CD8-positive, alpha-beta memory T cell (primary cell): ENCODE measurements at regions of chr12 and their contacts with region 1.

Region 1: DNA sequence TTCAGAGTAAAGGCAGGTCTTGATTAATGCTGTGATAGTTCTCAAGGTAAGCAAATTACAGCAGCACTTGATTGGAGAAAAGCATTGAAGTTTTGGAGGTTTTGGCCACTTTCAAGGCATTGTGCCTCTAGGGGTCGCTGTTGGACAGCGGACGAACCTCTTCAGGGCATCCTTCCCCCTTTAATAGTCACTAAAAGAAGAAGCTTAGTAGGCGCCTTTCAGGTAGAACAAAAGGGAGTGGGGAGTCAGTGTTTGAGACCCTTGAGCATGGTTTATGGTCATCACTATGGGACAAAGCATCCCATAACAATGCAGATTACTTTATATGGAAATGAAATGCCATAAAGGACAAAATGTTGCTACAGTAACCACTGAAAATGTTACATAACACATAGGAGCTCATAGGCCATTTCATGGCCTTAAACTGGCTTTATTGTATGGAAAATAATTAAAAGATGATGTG is 199.5 kb upstream of the DCN start:
- DNase-seq: peak; percentile 61 to 86 (median 78)
- H3K4me3 ChIP-seq: no peak overlapping the region
- H3K4me3 Mint-ChIP-seq: peak overlapping the region in 6 of 7 donors; percentile 50 to 79 (median 72)
- H3K27ac ChIP-seq: no peak overlapping the region
- H3K27ac Mint-ChIP-seq: peak overlapping the region in 5 of 8 donors; percentile 15 to 77 (median 49)
- H3K4me1 ChIP-seq: peaks cover 4% of the 10 kb centered on the region
- H3K4me1 Mint-ChIP-seq: peaks cover 4 to 9% (median 6%) of the 10 kb centered on the region in 3 donors
- H3K27me3 ChIP-seq: no peaks in the 10 kb centered on the region
- H3K27me3 Mint-ChIP-seq: peaks cover 5 to 37% of the 10 kb centered on the region in 2 donors

Region 2: GRCh38 chr12:91355150-91356006 is 26.7 kb before region 1 on chr12:
- CTCF ChIA-PET with region 1: no interaction called
- POLR2A ChIA-PET with region 1: no interaction called
- DNase-seq: peak; percentile 4 to 55 (median 12)
- H3K4me3 ChIP-seq: no peak overlapping the region
- H3K4me3 Mint-ChIP-seq: no peak overlapping the region
- H3K27ac ChIP-seq: no peak overlapping the region
- H3K27ac Mint-ChIP-seq: no peak overlapping the region
- H3K4me1 ChIP-seq: no peaks in the 10 kb centered on the region
- H3K4me1 Mint-ChIP-seq: peaks cover 0 to 5% (median 0%) of the 10 kb centered on the region in 3 donors
- H3K27me3 ChIP-seq: no peaks in the 10 kb centered on the region
- H3K27me3 Mint-ChIP-seq: peaks cover 7 to 40% of the 10 kb centered on the region in 2 donors

Region 3: GRCh38 chr12:91370086-91370868 is 11.8 kb before region 1 on chr12:
- CTCF ChIA-PET with region 1: interaction called, 11 read pairs
- POLR2A ChIA-PET with region 1: no interaction called
- DNase-seq: no peak
- H3K4me3 ChIP-seq: no peak overlapping the region
- H3K4me3 Mint-ChIP-seq: no peak overlapping the region
- H3K27ac ChIP-seq: no peak overlapping the region
- H3K27ac Mint-ChIP-seq: no peak overlapping the region
- H3K4me1 ChIP-seq: no peaks in the 10 kb centered on the region
- H3K4me1 Mint-ChIP-seq: peaks cover 0 to 4% (median 4%) of the 10 kb centered on the region in 3 donors
- H3K27me3 ChIP-seq: no peaks in the 10 kb centered on the region
- H3K27me3 Mint-ChIP-seq: peaks cover 11 to 35% of the 10 kb centered on the region in 2 donors

Region 4: DNA sequence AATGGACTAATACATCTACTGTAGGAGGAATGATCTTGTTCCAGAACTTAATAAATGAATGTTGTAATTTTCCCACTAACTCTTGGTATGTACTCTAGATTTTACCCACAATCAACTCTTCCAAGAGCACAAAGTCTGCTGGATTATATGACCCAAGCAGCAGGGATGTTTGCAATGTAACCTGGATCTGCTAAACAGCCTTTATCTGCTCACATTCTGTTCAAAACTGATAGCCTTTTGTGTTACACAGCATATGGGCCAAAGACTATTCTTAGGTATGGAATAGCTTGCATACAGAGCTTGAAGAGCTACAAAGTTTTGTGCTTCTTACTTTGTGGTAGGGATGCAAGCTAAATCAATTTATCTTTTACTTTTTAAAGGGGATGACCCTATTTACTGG is 14.2 kb after region 1 on chr12:
- CTCF ChIA-PET with region 1: interaction called, 13 read pairs
- POLR2A ChIA-PET with region 1: no interaction called
- DNase-seq: no peak
- H3K4me3 ChIP-seq: no peak overlapping the region
- H3K4me3 Mint-ChIP-seq: no peak overlapping the region
- H3K27ac ChIP-seq: no peak overlapping the region
- H3K27ac Mint-ChIP-seq: no peak overlapping the region
- H3K4me1 ChIP-seq: no peaks in the 10 kb centered on the region
- H3K4me1 Mint-ChIP-seq: no peaks in the 10 kb centered on the region
- H3K27me3 ChIP-seq: no peaks in the 10 kb centered on the region
- H3K27me3 Mint-ChIP-seq: peaks cover 2 to 4% of the 10 kb centered on the region in 2 donors

Region 5: GRCh38 chr12:91586015-91586414 is 203.9 kb after region 1 on chr12:
- CTCF ChIA-PET with region 1: no interaction called
- POLR2A ChIA-PET with region 1: no interaction called
- DNase-seq: no peak
- H3K4me3 ChIP-seq: no peak overlapping the region
- H3K4me3 Mint-ChIP-seq: no peak overlapping the region
- H3K27ac ChIP-seq: no peak overlapping the region
- H3K27ac Mint-ChIP-seq: no peak overlapping the region
- H3K4me1 ChIP-seq: no peaks in the 10 kb centered on the region
- H3K4me1 Mint-ChIP-seq: no peaks in the 10 kb centered on the region
- H3K27me3 ChIP-seq: no peaks in the 10 kb centered on the region
- H3K27me3 Mint-ChIP-seq: peaks cover 3 to 7% of the 10 kb centered on the region in 2 donors

Region 6: GRCh38 chr12:92570056-92570753 is 1188.1 kb after region 1 on chr12:
- CTCF ChIA-PET with region 1: interaction called, 29 read pairs
- POLR2A ChIA-PET with region 1: no interaction called
- DNase-seq: peak in 4 of 5 donors; percentile 35 to 72 (median 66)
- H3K4me3 ChIP-seq: no peak overlapping the region
- H3K4me3 Mint-ChIP-seq: no peak overlapping the region
- H3K27ac ChIP-seq: no peak overlapping the region
- H3K27ac Mint-ChIP-seq: no peak overlapping the region
- H3K4me1 ChIP-seq: peaks cover 22% of the 10 kb centered on the region
- H3K4me1 Mint-ChIP-seq: peaks cover 0 to 9% (median 6%) of the 10 kb centered on the region in 3 donors
- H3K27me3 ChIP-seq: no peaks in the 10 kb centered on the region
- H3K27me3 Mint-ChIP-seq: no peaks in the 10 kb centered on the region

Region 7: DNA sequence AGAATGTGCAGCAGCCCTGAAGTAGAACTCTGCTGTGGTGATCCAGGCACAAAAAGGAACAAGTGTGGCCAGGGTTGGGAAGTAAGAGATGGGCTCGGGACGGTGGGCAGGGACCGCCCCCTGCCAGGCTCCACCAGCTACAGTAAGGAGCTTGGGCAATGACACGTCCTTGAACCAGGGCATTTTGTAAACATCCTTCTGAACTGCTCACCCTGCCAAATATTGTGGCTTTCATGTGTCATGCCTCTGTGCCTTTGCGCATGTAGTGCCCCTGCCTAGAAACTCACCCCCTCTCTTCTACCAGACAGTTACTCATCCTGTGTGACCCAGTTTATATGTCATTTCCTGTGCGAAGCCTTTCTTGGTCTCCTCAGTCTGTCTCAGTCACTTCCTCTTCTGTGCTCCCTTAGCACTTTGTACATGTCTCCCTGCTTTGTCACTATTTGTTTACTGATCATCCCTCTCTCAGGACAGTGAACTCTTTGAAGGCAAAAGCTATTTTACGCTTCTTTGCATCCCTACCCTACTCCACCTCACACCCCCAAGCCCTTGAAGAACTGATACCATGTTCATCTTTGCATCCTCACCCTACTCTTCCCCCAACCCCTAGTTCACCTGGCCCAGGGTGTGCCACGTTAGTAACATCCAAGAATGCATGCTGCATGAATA is 1211.8 kb after region 1 on chr12:
- CTCF ChIA-PET with region 1: interaction called, 13 read pairs
- POLR2A ChIA-PET with region 1: no interaction called
- DNase-seq: peak; percentile 69 to 95 (median 90)
- H3K4me3 ChIP-seq: peak overlapping the region; percentile 12
- H3K4me3 Mint-ChIP-seq: peak overlapping the region; percentile 1 to 84 (median 39)
- H3K27ac ChIP-seq: peak overlapping the region; percentile 83
- H3K27ac Mint-ChIP-seq: peak overlapping the region; percentile 97 to 100 (median 100)
- H3K4me1 ChIP-seq: peaks cover 33% of the 10 kb centered on the region
- H3K4me1 Mint-ChIP-seq: peaks cover 31 to 62% (median 57%) of the 10 kb centered on the region in 3 donors
- H3K27me3 ChIP-seq: no peaks in the 10 kb centered on the region
- H3K27me3 Mint-ChIP-seq: no peaks in the 10 kb centered on the region

Region 8: DNA sequence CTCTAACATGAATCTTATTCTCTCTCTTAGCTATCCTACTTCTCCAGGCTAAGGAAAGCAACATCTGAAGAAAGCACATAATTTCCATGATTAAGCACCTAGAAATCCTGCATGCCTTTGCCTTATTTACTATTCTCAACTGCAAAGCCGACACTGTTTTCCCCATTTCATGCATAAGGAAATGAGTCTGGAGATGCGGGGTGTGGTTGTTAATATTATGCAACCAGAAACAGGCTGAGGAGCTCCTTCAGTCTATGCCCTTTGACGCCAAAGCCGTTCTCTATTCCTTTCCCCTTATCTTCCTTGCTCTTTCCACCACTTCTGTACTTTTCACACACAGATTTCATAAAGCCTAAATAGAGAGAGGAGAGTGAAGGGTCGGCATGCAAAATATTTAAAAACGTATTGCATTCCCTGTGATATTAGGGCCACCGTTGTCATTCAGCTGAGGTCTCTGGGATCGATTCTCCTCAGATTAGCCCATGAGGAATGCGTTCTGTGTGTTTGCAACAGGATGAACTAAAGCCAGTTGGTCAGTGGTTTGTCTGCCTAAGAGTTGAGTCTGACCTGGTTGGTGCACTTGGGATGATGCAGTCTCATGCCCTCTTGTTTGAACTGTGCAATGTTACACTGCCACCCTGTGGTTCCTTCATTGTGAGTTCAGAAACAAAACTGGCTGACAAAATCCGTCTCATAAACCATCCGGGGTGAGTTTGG is 1267.6 kb after region 1 on chr12:
- CTCF ChIA-PET with region 1: interaction called, 20 read pairs
- POLR2A ChIA-PET with region 1: no interaction called
- DNase-seq: peak; percentile 26 to 73 (median 53)
- H3K4me3 ChIP-seq: no peak overlapping the region
- H3K4me3 Mint-ChIP-seq: no peak overlapping the region
- H3K27ac ChIP-seq: no peak overlapping the region
- H3K27ac Mint-ChIP-seq: peak overlapping the region in 6 of 8 donors; percentile 3 to 79 (median 30)
- H3K4me1 ChIP-seq: no peaks in the 10 kb centered on the region
- H3K4me1 Mint-ChIP-seq: peaks cover 6 to 10% (median 10%) of the 10 kb centered on the region in 3 donors
- H3K27me3 ChIP-seq: no peaks in the 10 kb centered on the region
- H3K27me3 Mint-ChIP-seq: peaks cover 4 to 6% of the 10 kb centered on the region in 2 donors

Region 9: DNA sequence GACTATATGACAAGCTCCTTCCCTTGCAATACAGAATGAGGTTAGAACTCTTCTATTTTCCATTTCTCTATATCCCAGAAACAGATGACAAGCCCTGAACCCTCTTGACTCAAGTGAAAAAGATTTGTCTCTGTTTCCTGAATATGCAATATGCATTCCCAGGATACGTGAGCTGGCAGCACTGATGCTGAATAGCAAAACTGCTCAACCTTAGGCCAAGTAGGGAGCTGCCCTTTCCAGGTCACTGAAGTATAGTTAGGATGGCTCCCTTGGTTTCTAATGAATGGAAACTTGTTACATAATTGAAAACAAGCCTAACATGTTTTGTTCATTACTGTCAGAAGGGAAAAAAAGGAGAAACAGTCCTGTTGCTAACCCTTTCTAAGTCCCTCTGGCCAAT is 1272.8 kb after region 1 on chr12:
- CTCF ChIA-PET with region 1: interaction called, 20 read pairs
- POLR2A ChIA-PET with region 1: no interaction called
- DNase-seq: no peak
- H3K4me3 ChIP-seq: no peak overlapping the region
- H3K4me3 Mint-ChIP-seq: no peak overlapping the region
- H3K27ac ChIP-seq: no peak overlapping the region
- H3K27ac Mint-ChIP-seq: no peak overlapping the region
- H3K4me1 ChIP-seq: no peaks in the 10 kb centered on the region
- H3K4me1 Mint-ChIP-seq: peaks cover 3% of the 10 kb centered on the region in 3 donors
- H3K27me3 ChIP-seq: no peaks in the 10 kb centered on the region
- H3K27me3 Mint-ChIP-seq: peaks cover 5 to 6% of the 10 kb centered on the region in 2 donors